ENCODE measurements at regions of chr3 and their contacts with region 1.

Region 1: DNA sequence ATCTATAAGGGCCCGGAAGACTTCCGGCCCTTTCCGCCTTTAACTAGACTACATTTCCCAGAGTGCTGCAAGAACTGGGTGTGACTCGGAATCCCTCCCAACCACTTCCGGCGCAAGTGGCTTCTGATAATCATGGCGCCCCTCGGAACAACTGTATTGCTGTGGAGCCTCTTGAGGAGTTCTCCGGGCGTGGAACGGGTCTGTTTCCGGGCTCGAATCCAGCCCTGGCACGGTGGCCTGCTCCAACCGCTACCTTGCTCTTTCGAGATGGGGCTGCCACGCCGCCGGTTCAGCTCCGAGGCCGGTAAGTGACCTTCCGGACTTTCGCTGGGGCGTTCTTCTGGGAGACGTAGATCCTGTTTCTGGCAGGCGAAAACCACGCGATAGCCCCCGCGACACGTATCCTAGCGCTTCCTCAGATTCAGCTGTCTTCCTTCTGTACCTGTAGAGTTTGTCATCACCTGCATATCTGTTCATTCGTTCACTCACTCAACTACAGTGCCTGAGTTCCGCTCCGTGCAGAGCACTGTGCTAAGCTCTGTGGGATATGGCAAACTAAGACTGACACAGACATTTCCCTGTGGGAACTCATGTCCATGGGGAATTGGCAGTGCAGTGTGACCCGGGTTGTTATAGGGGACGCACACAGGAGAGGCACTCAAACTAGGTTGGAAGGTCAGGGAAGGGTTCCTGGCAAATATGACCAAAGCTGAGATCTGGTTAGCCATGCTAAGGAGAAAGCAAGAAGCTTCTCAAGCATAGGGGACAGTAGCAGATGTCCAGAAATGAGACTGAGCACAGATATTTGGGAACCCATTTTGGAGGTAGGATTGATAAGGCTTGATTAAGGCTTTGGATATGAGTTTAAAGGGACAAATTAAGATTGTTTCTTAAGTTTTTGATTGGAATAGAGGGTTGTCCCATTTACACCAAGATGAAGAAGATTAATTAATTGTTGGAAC is at the start of gene MRPS22:
- DNase-seq: peak; percentile 84
- H3K4me3 ChIP-seq: peak within 1 kb of the TSS; percentile 84 to 98
- H3K27ac ChIP-seq: peak within 1 kb of the TSS; percentile 84 to 89
- H3K4me1 ChIP-seq: peaks cover 7 to 12% of the 10 kb centered on the region in 2 experiments; a peak in 3 of 4 replicates
- H3K27me3 ChIP-seq: no peaks in the 10 kb centered on the region
- CTCF ChIP-seq: no peak
- EP300 ChIP-seq: no peak
- RAD21 ChIP-seq: no peak
- polyA plus RNA-seq, gene MRPS22: 50.6 and 53.0 TPM in 2 replicates

Region 2: GRCh38 chr3:139281522-139282196 is 62.5 kb before region 1 on chr3:
- CTCF ChIA-PET with region 1: no interaction called
- POLR2A ChIA-PET with region 1: no interaction called
- DNase-seq: peak; percentile 53
- H3K4me3 ChIP-seq: no peak overlapping the region
- H3K27ac ChIP-seq: no peak overlapping the region; a peak in 1 of 4 replicates
- H3K4me1 ChIP-seq: peaks cover 0 to 14% of the 10 kb centered on the region in 2 experiments; a peak in 2 of 4 replicates
- H3K27me3 ChIP-seq: no peaks in the 10 kb centered on the region
- CTCF ChIP-seq: no peak
- EP300 ChIP-seq: no peak
- RAD21 ChIP-seq: no peak

Region 3: GRCh38 chr3:139329345-139329850 is 14.8 kb before region 1 on chr3:
- CTCF ChIA-PET with region 1: interaction called, 11 read pairs
- POLR2A ChIA-PET with region 1: no interaction called
- DNase-seq: peak; percentile 87
- H3K4me3 ChIP-seq: peak overlapping the region; percentile 24 to 55; a peak in 2 of 4 replicates
- H3K27ac ChIP-seq: no peak overlapping the region
- H3K4me1 ChIP-seq: peaks cover 0 to 5% of the 10 kb centered on the region in 2 experiments; a peak in 1 of 4 replicates
- H3K27me3 ChIP-seq: peaks cover 11% of the 10 kb centered on the region; the same call in 1 of the 2 replicates
- CTCF ChIP-seq: peak; percentile 99
- EP300 ChIP-seq: no peak
- RAD21 ChIP-seq: peak; percentile 98

Region 4: GRCh38 chr3:139378587-139379241 is 34.5 kb after region 1 on chr3:
- CTCF ChIA-PET with region 1: no interaction called
- POLR2A ChIA-PET with region 1: no interaction called
- DNase-seq: peak; percentile 22
- H3K4me3 ChIP-seq: no peak overlapping the region
- H3K27ac ChIP-seq: no peak overlapping the region; a peak in 2 of 4 replicates
- H3K4me1 ChIP-seq: peaks cover 0 to 4% of the 10 kb centered on the region in 2 experiments; a peak in 1 of 4 replicates
- H3K27me3 ChIP-seq: no peaks in the 10 kb centered on the region
- CTCF ChIP-seq: no peak
- EP300 ChIP-seq: no peak
- RAD21 ChIP-seq: no peak

Measured in SK-N-SH (cell line).